ENCODE measurements at regions of chr4 and their contacts with region 1.

Region 1: GRCh38 chr4:138035781-138036258 is 206.3 kb downstream of the SLC7A11 start:
- DNase-seq: peak; percentile 19
- ATAC-seq: peak; percentile 100
- H3K4me3 Mint-ChIP-seq: no peak overlapping the region
- H3K27ac Mint-ChIP-seq: peak overlapping the region; percentile 52
- H3K4me1 Mint-ChIP-seq: peaks cover 11% of the 10 kb centered on the region
- H3K27me3 Mint-ChIP-seq: peaks cover under 1% of the 10 kb centered on the region
- CTCF ChIP-seq: no peak

Region 2: GRCh38 chr4:136036744-136037143 is 1999.1 kb before region 1 on chr4:
- CTCF ChIA-PET with region 1: no interaction called
- POLR2A ChIA-PET with region 1: no interaction called
- intact Hi-C with region 1: no loop called
- DNase-seq: no peak
- ATAC-seq: no peak
- H3K4me3 Mint-ChIP-seq: no peak overlapping the region
- H3K27ac Mint-ChIP-seq: no peak overlapping the region
- H3K4me1 Mint-ChIP-seq: no peaks in the 10 kb centered on the region
- H3K27me3 Mint-ChIP-seq: no peaks in the 10 kb centered on the region
- CTCF ChIP-seq: no peak

Region 3: DNA sequence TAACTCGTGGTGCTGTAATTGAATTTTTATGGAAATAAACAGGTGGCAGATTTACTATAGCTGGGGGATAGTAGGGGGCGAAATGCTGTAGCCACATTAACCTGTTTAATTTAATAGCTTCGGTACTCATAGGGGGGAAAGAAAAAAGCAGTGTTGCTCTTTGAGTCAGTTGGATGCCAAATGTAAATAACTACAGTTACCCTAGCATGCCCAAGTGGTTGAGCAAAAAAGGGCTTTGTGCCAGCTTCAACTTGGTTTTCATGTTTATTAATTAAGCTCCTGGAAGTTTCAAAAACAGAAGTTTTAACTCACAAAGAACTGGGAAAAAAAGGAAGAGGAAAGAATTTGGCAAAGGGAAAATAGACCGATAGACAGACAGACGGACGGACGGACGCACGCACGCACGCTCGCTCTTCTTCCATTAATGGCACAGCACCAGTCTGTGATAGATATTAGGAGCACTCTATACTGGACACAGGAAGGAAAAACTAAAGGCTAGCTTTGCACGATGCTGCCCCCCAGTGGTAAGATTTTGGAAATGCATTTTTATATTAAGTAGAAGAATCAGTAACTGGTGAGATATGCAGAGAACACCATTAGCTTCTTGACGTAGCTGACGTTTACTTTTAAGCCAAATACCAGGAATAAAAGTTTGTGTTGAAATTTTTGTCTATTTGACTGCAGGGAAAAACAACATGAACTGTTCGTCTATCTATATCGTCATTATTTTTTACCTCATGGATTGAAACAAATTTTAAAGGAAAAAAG is 54.5 kb after region 1 on chr4:
- CTCF ChIA-PET with region 1: interaction called, 32 read pairs
- POLR2A ChIA-PET with region 1: no interaction called
- intact Hi-C with region 1: loop called (anchors 1 kb)
- DNase-seq: no peak
- ATAC-seq: peak; percentile 61
- H3K4me3 Mint-ChIP-seq: no peak overlapping the region
- H3K27ac Mint-ChIP-seq: no peak overlapping the region
- H3K4me1 Mint-ChIP-seq: no peaks in the 10 kb centered on the region
- H3K27me3 Mint-ChIP-seq: peaks cover 9% of the 10 kb centered on the region
- CTCF ChIP-seq: peak; percentile 25

Region 4: GRCh38 chr4:138114434-138114833 is 78.6 kb after region 1 on chr4:
- CTCF ChIA-PET with region 1: interaction called, 3 read pairs
- POLR2A ChIA-PET with region 1: no interaction called
- intact Hi-C with region 1: loop called (anchors 1 kb)
- DNase-seq: no peak
- ATAC-seq: peak; percentile 97
- H3K4me3 Mint-ChIP-seq: peak overlapping the region; percentile 22
- H3K27ac Mint-ChIP-seq: peak overlapping the region; percentile 81
- H3K4me1 Mint-ChIP-seq: peaks cover 31% of the 10 kb centered on the region
- H3K27me3 Mint-ChIP-seq: no peaks in the 10 kb centered on the region
- CTCF ChIP-seq: no peak

Region 5: DNA sequence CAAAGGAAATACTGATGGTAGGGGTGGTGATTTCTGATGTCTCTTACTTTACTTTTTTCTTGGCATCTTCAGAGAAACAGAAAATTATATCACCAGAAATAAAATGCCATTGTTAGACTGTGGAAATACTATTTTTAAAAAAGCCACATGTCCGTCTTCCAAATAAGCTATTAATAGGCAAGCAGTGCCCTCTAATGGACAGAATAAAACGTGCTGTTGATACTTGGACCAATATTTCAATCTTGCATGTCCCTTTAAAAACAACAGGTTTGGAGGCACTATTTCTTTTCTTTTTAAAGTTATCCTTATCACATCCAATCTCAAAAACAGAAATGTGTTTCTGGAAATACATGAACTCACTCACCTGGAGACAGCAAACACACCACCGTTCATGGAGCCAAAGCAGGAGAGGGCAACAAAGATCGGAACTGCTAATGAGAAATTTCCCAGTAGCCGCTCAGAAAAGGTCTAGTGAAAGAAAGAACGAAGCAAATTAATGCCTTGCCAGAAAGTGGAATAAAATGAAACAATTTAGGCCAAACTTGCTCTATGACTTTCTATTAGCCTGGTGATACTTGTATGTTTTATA is 147.1 kb after region 1 on chr4:
- CTCF ChIA-PET with region 1: interaction called, 19 read pairs
- POLR2A ChIA-PET with region 1: no interaction called
- intact Hi-C with region 1: loop called (anchors 1 kb)
- DNase-seq: no peak
- ATAC-seq: peak; percentile 28
- H3K4me3 Mint-ChIP-seq: no peak overlapping the region
- H3K27ac Mint-ChIP-seq: no peak overlapping the region
- H3K4me1 Mint-ChIP-seq: no peaks in the 10 kb centered on the region
- H3K27me3 Mint-ChIP-seq: peaks cover 3% of the 10 kb centered on the region
- CTCF ChIP-seq: no peak

Region 6: GRCh38 chr4:138522366-138522765 is 486.5 kb after region 1 on chr4:
- CTCF ChIA-PET with region 1: no interaction called
- POLR2A ChIA-PET with region 1: no interaction called
- intact Hi-C with region 1: loop called (anchors 10 kb)
- DNase-seq: no peak
- ATAC-seq: no peak
- H3K4me3 Mint-ChIP-seq: no peak overlapping the region
- H3K27ac Mint-ChIP-seq: no peak overlapping the region
- H3K4me1 Mint-ChIP-seq: no peaks in the 10 kb centered on the region
- H3K27me3 Mint-ChIP-seq: no peaks in the 10 kb centered on the region
- CTCF ChIP-seq: no peak

Region 7: DNA sequence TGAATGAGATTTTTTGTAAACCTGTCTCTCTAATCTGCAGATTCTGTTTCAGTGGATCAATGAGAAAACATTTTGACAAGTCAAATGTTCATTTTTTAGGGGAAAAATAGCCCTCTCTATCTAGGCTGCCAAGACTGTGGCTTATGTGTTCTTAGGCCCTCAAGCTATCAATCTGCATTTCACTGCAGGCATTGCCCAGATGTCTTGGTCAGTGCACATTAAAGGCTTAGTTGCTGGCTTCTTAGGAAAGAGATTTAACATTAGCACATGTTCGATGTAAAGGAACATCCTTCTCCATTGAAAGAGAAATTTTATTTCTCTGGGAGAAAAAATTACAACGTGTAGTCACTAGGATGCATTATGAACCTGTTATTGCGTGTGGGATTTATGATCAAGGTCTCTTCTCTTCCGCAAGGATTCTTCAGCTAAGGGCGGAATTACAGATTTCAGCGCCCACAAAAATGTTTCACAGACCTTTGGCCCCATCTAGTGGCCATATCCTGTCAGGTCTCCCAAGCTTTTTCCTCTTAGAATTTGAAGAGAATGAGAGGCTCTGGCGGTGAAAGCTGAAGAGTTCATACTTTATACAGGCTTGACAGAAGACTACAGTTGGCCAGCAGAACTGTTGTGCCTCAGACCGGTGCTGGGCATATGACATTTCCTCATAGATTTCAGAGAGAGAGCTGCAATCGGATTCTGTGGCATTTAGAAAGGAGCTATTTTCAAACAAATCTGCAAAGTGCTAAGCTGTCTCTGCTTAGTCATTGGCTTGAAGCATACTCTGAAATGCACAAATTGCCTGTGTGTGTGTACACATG is 835.1 kb after region 1 on chr4:
- CTCF ChIA-PET with region 1: interaction called, 5 read pairs
- POLR2A ChIA-PET with region 1: no interaction called
- intact Hi-C with region 1: loop called (anchors 1 kb)
- DNase-seq: no peak
- ATAC-seq: no peak
- H3K4me3 Mint-ChIP-seq: no peak overlapping the region
- H3K27ac Mint-ChIP-seq: no peak overlapping the region
- H3K4me1 Mint-ChIP-seq: peaks cover 2% of the 10 kb centered on the region
- H3K27me3 Mint-ChIP-seq: peaks cover 20% of the 10 kb centered on the region
- CTCF ChIP-seq: peak; percentile 89